ENCODE measurements at regions of chr7 and their contacts with region 1.

Region 1: GRCh38 chr7:74479961-74480829 is 26.5 kb downstream of the GTF2IRD1 start:
- DNase-seq: peak; percentile 82 to 83
- ATAC-seq: peak; percentile 63 to 80 (median 73)
- H3K4me3 ChIP-seq: peak overlapping the region in 9 of 10 donors; percentile 24 to 64 (median 53)
- H3K27ac ChIP-seq: peak overlapping the region; percentile 84 to 98 (median 94)
- H3K4me1 ChIP-seq: peaks cover 25 to 81% (median 58%) of the 10 kb centered on the region in 9 donors
- H3K27me3 ChIP-seq: peaks cover 0 to 14% (median 0%) of the 10 kb centered on the region in 7 donors
- CTCF ChIP-seq: peak in 2 of 9 donors; percentile 7 to 20

Region 2: GRCh38 chr7:74083117-74083876 is 396.9 kb before region 1 on chr7 and contains the start of gene LIMK1:
- intact Hi-C with region 1: no loop called
- DNase-seq: peak; percentile 74 to 87
- ATAC-seq: peak; percentile 84 to 97 (median 92)
- H3K4me3 ChIP-seq: peak within 1 kb of the TSS; percentile 50 to 95 (median 76)
- H3K27ac ChIP-seq: peak within 1 kb of the TSS in 7 of 10 donors; percentile 23 to 85 (median 56)
- H3K4me1 ChIP-seq: peaks cover 6 to 23% (median 20%) of the 10 kb centered on the region in 9 donors
- H3K27me3 ChIP-seq: no peaks in the 10 kb centered on the region
- CTCF ChIP-seq: no peak
- total RNA-seq, gene LIMK1: 6.1 to 17.3 (median 9.9) TPM

Region 3: GRCh38 chr7:74365322-74366022 is 114.7 kb before region 1 on chr7:
- intact Hi-C with region 1: no loop called
- DNase-seq: peak; percentile 44 to 66
- ATAC-seq: peak; percentile 71 to 95 (median 90)
- H3K4me3 ChIP-seq: no peak overlapping the region
- H3K27ac ChIP-seq: no peak overlapping the region
- H3K4me1 ChIP-seq: no peaks in the 10 kb centered on the region
- H3K27me3 ChIP-seq: no peaks in the 10 kb centered on the region
- CTCF ChIP-seq: no peak

Region 4: GRCh38 chr7:74501298-74501697 is 21.1 kb after region 1 on chr7:
- intact Hi-C with region 1: loop called in 1 of 10 experiments (anchors 1 kb)
- DNase-seq: peak; percentile 67 to 68
- ATAC-seq: peak; percentile 60 to 91 (median 79)
- H3K4me3 ChIP-seq: peak overlapping the region in 3 of 10 donors; percentile 17 to 29 (median 24)
- H3K27ac ChIP-seq: peak overlapping the region in 8 of 10 donors; percentile 53 to 82 (median 72)
- H3K4me1 ChIP-seq: peaks cover 0 to 29% (median 3%) of the 10 kb centered on the region in 9 donors
- H3K27me3 ChIP-seq: no peaks in the 10 kb centered on the region
- CTCF ChIP-seq: no peak

Region 5: DNA sequence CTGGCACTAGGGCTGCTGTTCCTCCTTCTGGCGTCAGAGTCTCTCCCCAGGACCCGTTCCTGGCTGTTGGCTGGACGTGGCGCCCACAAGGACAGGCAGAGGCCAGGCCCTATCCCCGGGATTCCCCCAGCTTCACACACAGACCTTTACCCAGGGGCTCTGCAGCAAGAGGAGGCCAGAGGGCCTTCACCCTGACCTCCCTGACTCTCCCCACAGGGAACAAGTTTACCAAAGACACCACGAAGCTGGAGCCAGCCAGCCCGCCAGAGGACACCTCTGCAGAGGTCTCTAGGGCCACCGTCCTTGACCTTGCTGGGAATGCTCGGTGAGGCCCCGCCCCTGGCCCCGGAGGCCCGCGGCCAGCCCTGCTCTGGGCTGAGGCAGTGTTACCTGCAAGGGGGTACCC is 55.8 kb after region 1 on chr7:
- intact Hi-C with region 1: loop called in 3 of 10 experiments (anchors 2 to 10 kb)
- DNase-seq: peak in 1 of 2 donors; percentile 39
- ATAC-seq: peak in 7 of 8 donors; percentile 17 to 51 (median 37)
- H3K4me3 ChIP-seq: no peak overlapping the region
- H3K27ac ChIP-seq: peak overlapping the region in 9 of 10 donors; percentile 45 to 76 (median 68)
- H3K4me1 ChIP-seq: peaks cover 0 to 14% (median 2%) of the 10 kb centered on the region in 9 donors
- H3K27me3 ChIP-seq: no peaks in the 10 kb centered on the region
- CTCF ChIP-seq: no peak

Region 6: GRCh38 chr7:74544706-74545469 is 64.7 kb after region 1 on chr7:
- intact Hi-C with region 1: loop called in 1 of 10 experiments (anchors 10 kb)
- DNase-seq: no peak
- ATAC-seq: no peak
- H3K4me3 ChIP-seq: no peak overlapping the region
- H3K27ac ChIP-seq: no peak overlapping the region
- H3K4me1 ChIP-seq: peaks cover 0 to 11% (median 0%) of the 10 kb centered on the region in 9 donors
- H3K27me3 ChIP-seq: no peaks in the 10 kb centered on the region
- CTCF ChIP-seq: peak in 7 of 9 donors; percentile 18 to 52 (median 38)

Region 7: DNA sequence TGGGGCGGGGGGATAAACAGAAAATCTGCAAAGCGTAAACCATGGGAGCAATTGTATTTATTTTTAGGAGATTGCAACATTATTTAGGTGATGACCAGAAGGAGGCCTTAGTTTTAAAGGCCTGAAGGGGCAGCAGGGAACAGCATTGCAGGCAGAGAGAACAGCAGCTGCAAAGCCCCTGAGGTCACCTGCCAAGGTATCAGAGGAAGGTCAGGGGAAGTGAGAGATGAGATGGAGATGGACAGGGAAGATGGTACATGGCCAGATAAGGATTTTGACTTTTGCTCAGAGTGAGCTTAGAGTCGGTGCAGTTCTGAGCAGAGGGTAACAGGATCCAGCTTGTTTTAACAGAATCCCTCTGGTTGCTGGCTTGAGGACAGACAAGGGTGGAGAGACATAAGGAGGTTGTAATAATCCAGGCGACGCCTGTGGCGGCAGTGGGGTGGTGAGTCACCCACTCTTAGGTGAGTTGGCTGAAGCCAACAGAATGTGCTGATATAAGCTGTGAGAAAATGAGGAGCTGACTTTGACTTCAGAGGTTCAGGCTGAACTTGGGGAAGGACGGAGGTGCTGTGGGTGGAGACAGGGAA is 95.0 kb after region 1 on chr7:
- intact Hi-C with region 1: no loop called
- DNase-seq: no peak
- ATAC-seq: no peak
- H3K4me3 ChIP-seq: no peak overlapping the region
- H3K27ac ChIP-seq: no peak overlapping the region
- H3K4me1 ChIP-seq: peaks cover 0 to 5% (median 0%) of the 10 kb centered on the region in 9 donors
- H3K27me3 ChIP-seq: no peaks in the 10 kb centered on the region
- CTCF ChIP-seq: no peak

Measured in heart right ventricle (tissue), 16 donors.